ENCODE measurements at regions of chr16 and their contacts with region 1.

Region 1: GRCh38 chr16:28974437-28975157 is at the start of gene SPNS1:
- DNase-seq: peak; percentile 89 to 98
- H3K4me3 ChIP-seq: peak within 1 kb of the TSS; percentile 94
- H3K27ac ChIP-seq: peak within 1 kb of the TSS; percentile 62
- H3K4me1 ChIP-seq: peaks cover 7% of the 10 kb centered on the region
- H3K27me3 ChIP-seq: no peaks in the 10 kb centered on the region
- CTCF ChIP-seq: no peak
- total RNA-seq, gene SPNS1: 72.0 and 96.2 TPM in 2 replicates

Region 2: GRCh38 chr16:28063641-28064061 is 910.9 kb before region 1 on chr16 and contains the start of gene GSG1L:
- CTCF ChIA-PET with region 1: no interaction called
- POLR2A ChIA-PET with region 1: no interaction called
- intact Hi-C with region 1: no loop called
- DNase-seq: no peak
- H3K4me3 ChIP-seq: no peak within 1 kb of the TSS
- H3K27ac ChIP-seq: no peak within 1 kb of the TSS
- H3K4me1 ChIP-seq: no peaks in the 10 kb centered on the region
- H3K27me3 ChIP-seq: peaks cover 56% of the 10 kb centered on the region
- CTCF ChIP-seq: no peak
- total RNA-seq, gene GSG1L: not detected in 2 replicates

Region 3: GRCh38 chr16:28910086-28911031 is 64.2 kb before region 1 on chr16:
- CTCF ChIA-PET with region 1: interaction called, 10 read pairs
- POLR2A ChIA-PET with region 1: no interaction called
- intact Hi-C with region 1: no loop called
- DNase-seq: peak; percentile 59 to 84
- H3K4me3 ChIP-seq: no peak overlapping the region
- H3K27ac ChIP-seq: peak overlapping the region; percentile 72
- H3K4me1 ChIP-seq: peaks cover 15% of the 10 kb centered on the region
- H3K27me3 ChIP-seq: no peaks in the 10 kb centered on the region
- CTCF ChIP-seq: no peak

Region 4: DNA sequence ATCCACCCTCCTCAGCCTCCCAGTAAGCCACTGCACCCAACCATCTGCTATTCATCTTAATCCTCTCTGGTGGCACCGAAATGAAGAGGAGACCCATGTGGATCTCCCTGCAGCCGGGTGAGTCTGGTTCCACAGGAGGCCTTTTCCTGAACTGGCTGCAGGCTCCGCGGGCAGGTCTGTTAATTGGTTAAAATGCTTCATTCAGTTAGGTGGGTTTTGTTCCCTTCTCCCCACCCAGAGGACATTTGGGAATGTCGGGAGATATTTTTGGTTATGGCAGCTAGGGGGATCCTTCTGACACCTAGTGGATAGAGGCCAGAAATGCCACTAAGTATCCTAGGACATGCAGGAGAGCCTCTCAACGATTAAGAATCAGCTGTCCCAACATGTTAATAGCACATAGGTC is 754.5 kb after region 1 on chr16:
- CTCF ChIA-PET with region 1: no interaction called
- POLR2A ChIA-PET with region 1: no interaction called
- intact Hi-C with region 1: loop called (anchors 10 kb)
- DNase-seq: peak; percentile 37 to 53
- H3K4me3 ChIP-seq: no peak overlapping the region; the same call in 1 of the 2 replicates
- H3K27ac ChIP-seq: no peak overlapping the region
- H3K4me1 ChIP-seq: no peaks in the 10 kb centered on the region
- H3K27me3 ChIP-seq: no peaks in the 10 kb centered on the region
- CTCF ChIP-seq: peak; percentile 84

Measured in PC-9 (cell line).